ENCODE measurements at regions of chr4 and their contacts with region 1.

Region 1: DNA sequence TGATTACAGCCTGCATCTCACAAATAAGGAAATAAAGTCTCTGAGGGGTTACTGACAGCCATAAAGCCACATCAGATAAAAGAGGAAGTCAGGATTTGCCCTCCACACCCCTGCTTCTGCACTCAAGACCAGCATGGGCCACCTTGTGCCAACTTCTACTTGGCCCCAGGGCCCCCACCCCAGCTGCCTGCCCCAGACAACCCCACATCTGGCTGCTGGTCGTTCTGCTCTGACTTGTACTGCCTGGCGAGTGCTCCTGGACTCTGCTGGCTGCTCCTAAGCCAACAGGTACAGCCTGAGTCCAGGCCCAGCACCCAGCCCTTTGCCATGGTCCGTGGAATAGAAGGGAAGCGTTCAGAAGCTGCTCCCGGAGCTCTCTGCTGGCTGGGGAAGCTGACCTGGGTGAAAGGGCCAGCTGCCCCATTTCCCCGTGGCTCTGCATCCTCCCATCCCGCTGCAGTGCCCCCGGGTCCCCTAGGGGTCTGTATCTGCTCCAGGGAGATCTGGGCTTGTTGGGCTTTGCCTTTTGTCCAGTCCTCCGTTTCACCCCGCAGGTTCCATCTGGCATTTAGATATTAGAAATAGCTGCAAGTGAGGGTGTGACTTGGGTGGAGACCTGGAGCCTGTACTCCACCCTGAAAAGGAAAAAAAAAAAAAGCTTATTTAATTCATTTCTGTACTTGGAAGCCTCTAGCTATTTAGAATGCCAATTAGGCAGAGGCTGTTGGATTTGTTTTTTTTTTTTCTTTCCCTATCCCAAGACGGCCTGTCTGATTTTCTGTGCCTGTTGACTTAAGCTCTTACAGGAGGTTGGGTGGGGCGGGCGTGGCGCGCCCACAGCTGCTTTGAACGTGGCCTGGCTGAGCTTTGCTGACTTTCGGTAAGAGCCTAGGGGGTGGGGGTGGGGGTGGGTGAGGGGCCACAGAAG is 194.7 kb downstream of the PTTG2 start:
- DNase-seq: peak; percentile 59
- H3K4me3 Mint-ChIP-seq: peak overlapping the region; percentile 56
- H3K27ac Mint-ChIP-seq: peak overlapping the region; percentile 91
- H3K4me1 Mint-ChIP-seq: peaks cover 49% of the 10 kb centered on the region
- H3K27me3 Mint-ChIP-seq: no peaks in the 10 kb centered on the region
- CTCF ChIP-seq: no peak

Region 2: DNA sequence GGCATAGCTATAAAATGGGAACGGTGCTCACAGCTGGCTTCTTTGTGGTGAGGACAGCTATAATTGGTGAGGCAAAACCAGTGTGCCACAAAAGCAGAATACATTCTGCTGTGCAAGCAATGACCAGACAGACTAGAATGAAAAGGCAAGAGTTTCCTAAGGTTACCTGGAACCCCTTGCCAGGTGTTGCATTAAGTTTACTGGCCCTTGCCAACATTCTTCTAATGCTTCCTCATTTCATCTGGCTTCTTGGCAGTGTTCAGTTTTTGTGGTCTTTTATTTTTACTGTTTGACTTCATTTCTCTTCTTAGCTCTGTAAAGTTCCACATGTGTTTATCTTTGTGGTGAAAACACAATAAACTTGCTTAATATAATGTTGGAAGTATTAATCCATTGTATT is 63.3 kb before region 1 on chr4:
- CTCF ChIA-PET with region 1: no interaction called
- POLR2A ChIA-PET with region 1: interaction called, 16 read pairs
- intact Hi-C with region 1: no loop called
- DNase-seq: peak; percentile 50
- H3K4me3 Mint-ChIP-seq: no peak overlapping the region
- H3K27ac Mint-ChIP-seq: peak overlapping the region; percentile 63
- H3K4me1 Mint-ChIP-seq: peaks cover 12% of the 10 kb centered on the region
- H3K27me3 Mint-ChIP-seq: no peaks in the 10 kb centered on the region
- CTCF ChIP-seq: no peak

Measured in MCF 10A (cell line).